ENCODE measurements at regions of chr20 and their contacts with region 1.

Region 1: GRCh38 chr20:60262967-60263603 is 304.9 kb downstream of the CDH26 start:
- DNase-seq: peak; percentile 56 to 76
- ATAC-seq: peak; percentile 60 to 80 (median 64)
- H3K4me3 ChIP-seq: no peak overlapping the region
- H3K4me3 Mint-ChIP-seq: no peak overlapping the region
- H3K27ac ChIP-seq: no peak overlapping the region
- H3K27ac Mint-ChIP-seq: no peak overlapping the region
- H3K4me1 ChIP-seq: no peaks in the 10 kb centered on the region
- H3K4me1 Mint-ChIP-seq: no peaks in the 10 kb centered on the region
- H3K27me3 ChIP-seq: no peaks in the 10 kb centered on the region
- H3K27me3 Mint-ChIP-seq: no peaks in the 10 kb centered on the region
- CTCF ChIP-seq: peak; percentile 94

Region 2: DNA sequence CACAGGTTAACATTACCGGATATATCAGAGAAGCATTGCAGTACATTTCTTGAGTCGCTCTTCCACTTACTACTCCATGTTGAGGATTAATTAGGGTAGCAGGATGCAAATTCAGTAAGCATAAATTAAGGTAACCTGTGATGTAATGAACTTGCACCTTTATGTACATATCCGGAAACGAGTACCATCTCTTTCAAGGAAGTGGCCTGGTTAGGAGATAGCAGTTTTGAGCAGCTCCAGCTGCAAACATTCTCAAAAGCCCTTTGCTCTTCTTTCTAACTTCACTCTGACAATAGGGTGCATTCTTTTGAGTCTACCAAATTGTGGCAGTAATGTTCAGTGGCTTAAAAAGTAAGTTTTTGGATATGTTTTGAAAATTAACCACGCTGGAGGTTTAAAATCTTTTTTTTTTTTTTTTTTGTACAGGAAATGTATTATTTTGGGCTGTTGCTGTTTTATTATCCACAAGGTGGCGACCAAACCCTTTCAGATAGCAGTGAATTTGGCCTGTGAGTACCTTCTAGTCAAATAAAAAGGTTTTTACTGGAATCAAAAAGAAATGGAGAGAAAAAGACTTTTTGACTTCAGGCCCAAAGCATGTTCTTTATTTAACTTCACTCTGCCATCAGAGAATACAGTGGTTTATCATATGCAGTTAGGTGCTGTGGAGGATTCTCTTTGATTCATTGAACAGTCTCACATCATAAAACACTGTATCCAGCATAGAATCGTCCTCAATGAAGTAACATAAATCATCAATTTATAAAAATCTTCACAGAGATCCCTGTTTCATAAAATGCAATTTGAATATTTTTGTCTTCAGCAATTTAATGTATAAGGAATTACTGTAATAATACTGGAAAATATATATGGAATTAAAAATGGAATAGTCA is 314.0 kb before region 1 on chr20:
- intact Hi-C with region 1: loop called (anchors 1 kb)
- DNase-seq: peak in 1 of 2 donors; percentile 83
- ATAC-seq: peak; percentile 73 to 90 (median 79)
- H3K4me3 ChIP-seq: no peak overlapping the region
- H3K4me3 Mint-ChIP-seq: peak overlapping the region; percentile 81
- H3K27ac ChIP-seq: peak overlapping the region; percentile 66
- H3K27ac Mint-ChIP-seq: peak overlapping the region; percentile 76 to 92
- H3K4me1 ChIP-seq: peaks cover 3% of the 10 kb centered on the region
- H3K4me1 Mint-ChIP-seq: peaks cover 11 to 16% of the 10 kb centered on the region in 2 donors
- H3K27me3 ChIP-seq: no peaks in the 10 kb centered on the region
- H3K27me3 Mint-ChIP-seq: no peaks in the 10 kb centered on the region
- CTCF ChIP-seq: peak; percentile 81

Region 3: GRCh38 chr20:60137629-60138245 is 125.3 kb before region 1 on chr20:
- intact Hi-C with region 1: loop called (anchors 2 kb)
- DNase-seq: peak in 1 of 2 donors; percentile 52
- ATAC-seq: peak; percentile 51 to 85 (median 80)
- H3K4me3 ChIP-seq: peak overlapping the region; percentile 14
- H3K4me3 Mint-ChIP-seq: peak overlapping the region; percentile 96
- H3K27ac ChIP-seq: no peak overlapping the region
- H3K27ac Mint-ChIP-seq: peak overlapping the region in 1 of 2 donors; percentile 49
- H3K4me1 ChIP-seq: peaks cover 17% of the 10 kb centered on the region
- H3K4me1 Mint-ChIP-seq: peaks cover 51 to 56% of the 10 kb centered on the region in 2 donors
- H3K27me3 ChIP-seq: no peaks in the 10 kb centered on the region
- H3K27me3 Mint-ChIP-seq: no peaks in the 10 kb centered on the region
- CTCF ChIP-seq: peak; percentile 71

Measured in natural killer cell (primary cell).